MCF 10A (cell line): ENCODE measurements at regions of chr12 and their contacts with region 1.

Region 1: DNA sequence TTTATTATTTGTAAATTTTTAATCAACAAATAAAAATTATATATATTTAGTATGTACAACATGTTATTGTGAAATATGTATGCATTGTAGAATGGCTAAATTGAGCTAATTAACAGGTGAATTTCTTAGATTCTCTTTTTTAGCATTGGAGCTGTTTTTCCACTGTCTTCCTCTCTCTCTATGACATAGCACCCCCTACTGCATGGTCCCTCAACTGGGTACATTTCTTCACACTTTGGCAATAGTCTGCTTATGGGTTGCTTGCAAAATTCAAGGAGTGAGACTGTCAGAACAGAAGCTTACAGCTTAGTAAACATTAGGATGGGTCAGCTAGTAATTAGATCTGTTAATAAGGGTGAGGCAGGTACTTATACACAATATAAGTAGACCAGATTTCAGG is 658.5 kb upstream of the MGAT4C start:
- DNase-seq: peak; percentile 70
- H3K4me3 Mint-ChIP-seq: no peak overlapping the region
- H3K27ac Mint-ChIP-seq: peak overlapping the region; percentile 25
- H3K4me1 Mint-ChIP-seq: peaks cover 6% of the 10 kb centered on the region
- H3K27me3 Mint-ChIP-seq: no peaks in the 10 kb centered on the region
- CTCF ChIP-seq: peak; percentile 55

Region 2: GRCh38 chr12:85779768-85780167 is 1134.9 kb before region 1 on chr12:
- CTCF ChIA-PET with region 1: no interaction called
- POLR2A ChIA-PET with region 1: no interaction called
- intact Hi-C with region 1: no loop called
- DNase-seq: no peak
- H3K4me3 Mint-ChIP-seq: no peak overlapping the region
- H3K27ac Mint-ChIP-seq: no peak overlapping the region
- H3K4me1 Mint-ChIP-seq: peaks cover 13% of the 10 kb centered on the region
- H3K27me3 Mint-ChIP-seq: no peaks in the 10 kb centered on the region
- CTCF ChIP-seq: no peak

Region 3: GRCh38 chr12:85920324-85920947 is 994.3 kb before region 1 on chr12:
- CTCF ChIA-PET with region 1: interaction called, 5 read pairs
- POLR2A ChIA-PET with region 1: no interaction called
- intact Hi-C with region 1: loop called (anchors 10 kb)
- DNase-seq: peak; percentile 39
- H3K4me3 Mint-ChIP-seq: no peak overlapping the region
- H3K27ac Mint-ChIP-seq: no peak overlapping the region
- H3K4me1 Mint-ChIP-seq: no peaks in the 10 kb centered on the region
- H3K27me3 Mint-ChIP-seq: no peaks in the 10 kb centered on the region
- CTCF ChIP-seq: peak; percentile 50

Region 4: GRCh38 chr12:86196465-86196864 is 718.3 kb before region 1 on chr12:
- CTCF ChIA-PET with region 1: no interaction called
- POLR2A ChIA-PET with region 1: no interaction called
- intact Hi-C with region 1: loop called (anchors 5 kb)
- DNase-seq: no peak
- H3K4me3 Mint-ChIP-seq: no peak overlapping the region
- H3K27ac Mint-ChIP-seq: no peak overlapping the region
- H3K4me1 Mint-ChIP-seq: peaks cover 7% of the 10 kb centered on the region
- H3K27me3 Mint-ChIP-seq: no peaks in the 10 kb centered on the region
- CTCF ChIP-seq: no peak

Region 5: GRCh38 chr12:86838711-86839110 is 76.0 kb before region 1 on chr12:
- CTCF ChIA-PET with region 1: no interaction called
- POLR2A ChIA-PET with region 1: no interaction called
- intact Hi-C with region 1: no loop called
- DNase-seq: no peak
- H3K4me3 Mint-ChIP-seq: no peak overlapping the region
- H3K27ac Mint-ChIP-seq: no peak overlapping the region
- H3K4me1 Mint-ChIP-seq: no peaks in the 10 kb centered on the region
- H3K27me3 Mint-ChIP-seq: no peaks in the 10 kb centered on the region
- CTCF ChIP-seq: no peak

Region 6: GRCh38 chr12:86903159-86903558 is 11.6 kb before region 1 on chr12:
- CTCF ChIA-PET with region 1: interaction called, 28 read pairs
- POLR2A ChIA-PET with region 1: no interaction called
- intact Hi-C with region 1: no loop called
- DNase-seq: no peak
- H3K4me3 Mint-ChIP-seq: no peak overlapping the region
- H3K27ac Mint-ChIP-seq: no peak overlapping the region
- H3K4me1 Mint-ChIP-seq: no peaks in the 10 kb centered on the region
- H3K27me3 Mint-ChIP-seq: no peaks in the 10 kb centered on the region
- CTCF ChIP-seq: no peak

Region 7: DNA sequence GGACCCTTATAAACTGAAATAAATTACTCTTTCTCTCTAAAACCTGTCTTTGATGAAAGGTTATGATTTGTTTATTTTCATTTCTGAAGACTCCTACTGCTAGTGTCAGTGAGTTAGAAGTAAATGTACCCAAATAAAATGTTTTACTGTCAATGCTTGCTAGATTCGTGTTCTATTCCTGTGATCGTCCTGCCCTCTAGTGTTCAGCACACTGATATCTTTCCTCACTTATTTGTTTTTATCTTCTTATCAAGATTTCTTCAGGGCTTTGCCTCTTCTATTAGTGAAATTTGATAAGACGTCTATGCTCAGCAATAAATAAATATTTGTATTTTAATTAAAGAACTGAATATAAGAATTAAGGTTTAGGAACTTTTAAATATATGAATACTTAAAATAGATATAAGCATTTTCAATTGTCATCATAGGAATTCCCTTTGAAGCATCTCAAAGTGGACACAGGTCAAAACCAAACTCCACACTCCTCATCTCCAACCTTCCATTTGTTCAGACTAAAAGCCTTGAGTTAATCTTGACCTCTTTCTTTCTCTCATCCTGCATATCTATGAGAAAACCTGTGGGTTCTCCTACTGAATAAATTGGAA is 1038.6 kb after region 1 on chr12:
- CTCF ChIA-PET with region 1: interaction called, 3 read pairs
- POLR2A ChIA-PET with region 1: no interaction called
- intact Hi-C with region 1: loop called (anchors 2 kb)
- DNase-seq: peak; percentile 62
- H3K4me3 Mint-ChIP-seq: no peak overlapping the region
- H3K27ac Mint-ChIP-seq: peak overlapping the region; percentile 52
- H3K4me1 Mint-ChIP-seq: peaks cover 5% of the 10 kb centered on the region
- H3K27me3 Mint-ChIP-seq: no peaks in the 10 kb centered on the region
- CTCF ChIP-seq: peak; percentile 61